Endothelial cell of umbilical vein (primary cell): ENCODE measurements at regions of chr6 and their contacts with region 1.

Region 1: DNA sequence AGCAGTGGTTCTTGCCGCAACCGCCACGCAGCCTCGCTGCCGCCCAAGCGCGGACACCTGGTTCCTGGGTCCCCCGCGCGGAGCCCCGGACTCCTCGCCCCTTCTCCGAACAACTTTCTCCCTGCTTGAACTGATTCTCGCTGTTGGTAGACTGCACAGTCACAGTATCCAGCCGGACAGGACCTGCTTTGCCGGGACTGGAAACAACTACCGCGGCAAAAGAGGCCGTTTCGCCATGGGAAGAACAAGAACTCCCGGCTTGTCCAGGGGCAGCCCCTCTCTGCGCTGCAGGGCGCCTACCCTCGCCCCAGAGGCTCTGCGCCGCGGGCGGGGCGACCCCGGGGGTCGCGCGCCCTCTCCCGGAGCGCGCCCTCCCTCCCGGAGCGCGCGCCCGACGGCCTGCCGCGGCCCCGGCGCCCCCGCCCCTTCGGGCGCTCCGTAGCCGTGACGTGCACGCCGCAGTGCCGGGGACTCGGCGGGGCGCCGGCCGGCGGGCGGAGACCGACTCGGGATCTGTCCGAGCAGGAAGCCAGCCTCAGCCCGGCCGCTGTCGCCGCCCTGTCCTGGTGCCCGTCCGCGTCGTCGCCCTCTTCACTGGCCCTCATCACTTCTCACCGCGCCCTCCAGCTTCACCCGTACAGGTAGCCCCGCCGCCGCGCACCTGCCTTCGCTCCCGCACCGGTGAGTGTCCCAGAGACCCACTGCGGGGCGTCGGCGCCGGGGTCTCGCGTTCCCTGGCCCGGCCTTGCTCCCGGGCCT is at the start of gene MYO6:
- DNase-seq: peak; percentile 66
- H3K4me3 ChIP-seq: peak within 1 kb of the TSS; percentile 83 to 97 (median 96)
- H3K27ac ChIP-seq: peak within 1 kb of the TSS; percentile 70
- H3K4me1 ChIP-seq: peaks cover 45% of the 10 kb centered on the region
- H3K27me3 ChIP-seq: no peaks in the 10 kb centered on the region
- CTCF ChIP-seq: no peak
- POLR2A ChIP-seq: peak; percentile 86
- total RNA-seq, gene MYO6: 68.0 and 75.0 TPM in 2 replicates

Region 2: DNA sequence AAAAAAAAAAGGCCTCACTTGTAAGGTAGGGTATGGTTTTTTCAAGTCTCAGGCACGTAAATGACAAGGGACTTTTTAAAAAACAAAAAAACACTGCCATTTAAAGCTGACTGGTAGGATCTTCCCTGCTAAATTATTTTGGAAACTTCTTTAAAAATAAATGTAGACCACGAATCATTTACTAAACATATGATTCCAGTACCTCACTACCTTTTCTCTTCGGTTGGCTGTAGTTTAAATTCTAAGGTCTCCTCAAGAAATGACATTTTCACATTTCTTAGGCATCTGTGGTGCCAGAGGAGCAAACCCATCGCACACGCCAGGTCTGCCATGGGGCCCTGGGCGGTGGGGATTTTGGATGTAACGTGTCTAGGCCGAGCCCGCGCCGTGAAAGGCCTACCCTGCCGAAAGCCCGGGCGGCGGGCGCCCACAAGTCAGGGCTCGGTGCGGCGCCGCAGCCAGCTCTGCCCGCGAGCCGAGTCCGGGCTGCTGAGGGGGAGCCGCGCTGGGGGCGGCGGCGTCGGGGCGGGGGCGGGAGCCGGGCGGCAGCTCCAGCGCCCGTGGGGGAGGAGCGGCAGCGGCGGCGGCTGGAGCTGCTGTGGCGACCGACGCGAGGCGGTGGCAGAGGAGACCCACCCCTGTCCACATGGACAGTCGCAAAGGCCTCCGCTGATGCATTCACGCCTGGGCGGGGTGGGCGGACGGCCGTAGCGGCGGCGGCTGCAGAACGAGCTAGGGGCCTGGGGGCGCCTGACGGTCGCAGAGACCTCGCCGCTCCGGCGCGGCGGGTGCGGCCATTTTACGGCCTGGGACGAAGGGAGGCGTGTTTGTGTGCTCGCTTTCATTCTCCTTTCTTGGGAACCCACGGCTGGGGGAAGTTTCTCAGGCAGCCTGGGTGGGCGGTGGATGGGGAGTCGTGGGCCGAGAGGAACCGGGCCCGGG is 147.3 kb before region 1 on chr6 and contains the start of gene SENP6:
- CTCF ChIA-PET with region 1: no interaction called
- POLR2A ChIA-PET with region 1: no interaction called
- dilution Hi-C with region 1: no loop called
- intact Hi-C with region 1: loop called (anchors 5 kb)
- DNase-seq: peak; percentile 86
- H3K4me3 ChIP-seq: peak within 1 kb of the TSS; percentile 85 to 98 (median 95)
- H3K27ac ChIP-seq: peak within 1 kb of the TSS; percentile 95
- H3K4me1 ChIP-seq: peaks cover 11% of the 10 kb centered on the region
- H3K27me3 ChIP-seq: no peaks in the 10 kb centered on the region
- CTCF ChIP-seq: no peak
- POLR2A ChIP-seq: peak; percentile 88
- total RNA-seq, gene SENP6: 97.7 and 99.1 TPM in 2 replicates

Region 3: GRCh38 chr6:75719133-75719532 is 29.8 kb before region 1 on chr6:
- CTCF ChIA-PET with region 1: no interaction called
- POLR2A ChIA-PET with region 1: no interaction called
- dilution Hi-C with region 1: no loop called
- intact Hi-C with region 1: loop called (anchors 2 kb)
- DNase-seq: no peak
- H3K4me3 ChIP-seq: no peak overlapping the region
- H3K27ac ChIP-seq: no peak overlapping the region
- H3K4me1 ChIP-seq: peaks cover 11% of the 10 kb centered on the region
- H3K27me3 ChIP-seq: no peaks in the 10 kb centered on the region
- CTCF ChIP-seq: no peak
- POLR2A ChIP-seq: no peak

Region 4: GRCh38 chr6:75735491-75736186 is 13.3 kb before region 1 on chr6:
- CTCF ChIA-PET with region 1: no interaction called
- POLR2A ChIA-PET with region 1: no interaction called
- dilution Hi-C with region 1: no loop called
- intact Hi-C with region 1: loop called (anchors 2 kb)
- DNase-seq: peak; percentile 83
- H3K4me3 ChIP-seq: peak overlapping the region in 1 of 3 experiments; percentile 26
- H3K27ac ChIP-seq: peak overlapping the region; percentile 81
- H3K4me1 ChIP-seq: peaks cover 5% of the 10 kb centered on the region
- H3K27me3 ChIP-seq: no peaks in the 10 kb centered on the region
- CTCF ChIP-seq: no peak
- POLR2A ChIP-seq: no peak

Region 5: DNA sequence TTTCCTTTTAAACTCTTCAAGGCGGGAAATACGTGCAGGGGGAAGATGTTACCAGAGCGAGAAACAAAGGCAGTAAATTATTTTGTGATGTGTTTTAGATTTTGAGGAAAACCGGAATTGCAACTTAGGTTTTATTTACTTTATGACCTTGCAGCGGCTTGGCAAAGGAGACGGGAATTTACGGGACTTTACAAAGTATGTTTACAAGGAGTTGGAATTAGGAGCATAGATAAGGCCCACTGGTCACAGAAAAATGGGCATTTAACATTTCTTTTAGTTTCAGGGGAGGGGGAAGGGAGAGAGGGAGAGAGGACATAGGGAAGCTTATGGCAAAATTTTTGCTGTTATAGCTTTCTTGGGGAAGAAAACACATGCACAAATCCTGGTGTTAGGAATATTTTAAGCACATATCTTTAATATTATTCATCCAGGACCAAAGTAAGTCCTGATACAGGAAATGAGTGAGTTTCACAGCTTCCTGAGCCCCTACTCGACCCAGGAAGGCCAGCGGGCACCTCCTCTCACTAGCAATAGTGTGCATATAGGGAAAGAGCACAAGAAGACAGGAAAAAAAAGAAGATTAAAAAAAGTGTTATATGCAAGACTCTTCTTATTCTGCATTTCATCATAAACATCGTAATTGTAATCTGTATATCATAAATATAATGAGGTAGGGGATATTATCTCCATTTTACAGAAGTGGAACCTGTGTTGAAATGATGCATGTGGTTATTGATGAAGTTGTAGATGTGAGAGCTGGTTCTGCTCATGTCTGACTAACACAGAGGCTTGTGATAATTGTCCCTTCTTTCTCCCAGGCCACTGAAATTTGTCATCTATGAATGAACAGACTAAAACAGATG is 101.0 kb after region 1 on chr6:
- CTCF ChIA-PET with region 1: no interaction called
- POLR2A ChIA-PET with region 1: no interaction called
- dilution Hi-C with region 1: no loop called
- intact Hi-C with region 1: loop called (anchors 2 kb)
- DNase-seq: peak; percentile 58
- H3K4me3 ChIP-seq: peak overlapping the region in 1 of 3 experiments; percentile 33
- H3K27ac ChIP-seq: peak overlapping the region; percentile 40
- H3K4me1 ChIP-seq: peaks cover 47% of the 10 kb centered on the region
- H3K27me3 ChIP-seq: no peaks in the 10 kb centered on the region
- CTCF ChIP-seq: no peak
- POLR2A ChIP-seq: no peak

Region 6: GRCh38 chr6:75932067-75932466 is 183.1 kb after region 1 on chr6:
- CTCF ChIA-PET with region 1: no interaction called
- POLR2A ChIA-PET with region 1: no interaction called
- dilution Hi-C with region 1: no loop called
- intact Hi-C with region 1: no loop called
- DNase-seq: peak; percentile 45
- H3K4me3 ChIP-seq: no peak overlapping the region
- H3K27ac ChIP-seq: no peak overlapping the region
- H3K4me1 ChIP-seq: peaks cover 4% of the 10 kb centered on the region
- H3K27me3 ChIP-seq: no peaks in the 10 kb centered on the region
- CTCF ChIP-seq: peak; percentile 55 to 64
- POLR2A ChIP-seq: no peak